Activated CD4-positive, alpha-beta T cell treated with anti-CD3 and anti-CD28 coated beads, Interleukin-2, amount 10 ng/mL, durations not matched to agents 24 days and 14 days (primary cell): ENCODE measurements at regions of chr14 and their contacts with region 1.

Region 1: GRCh38 chr14:50085570-50086320 is 30.6 kb downstream of the VCPKMT start:
- DNase-seq: peak; percentile 74
- H3K4me3 Mint-ChIP-seq: peak overlapping the region; percentile 63
- H3K27ac Mint-ChIP-seq: peak overlapping the region; percentile 93
- H3K4me1 Mint-ChIP-seq: peaks cover 80% of the 10 kb centered on the region
- H3K27me3 Mint-ChIP-seq: no peaks in the 10 kb centered on the region

Region 2: DNA sequence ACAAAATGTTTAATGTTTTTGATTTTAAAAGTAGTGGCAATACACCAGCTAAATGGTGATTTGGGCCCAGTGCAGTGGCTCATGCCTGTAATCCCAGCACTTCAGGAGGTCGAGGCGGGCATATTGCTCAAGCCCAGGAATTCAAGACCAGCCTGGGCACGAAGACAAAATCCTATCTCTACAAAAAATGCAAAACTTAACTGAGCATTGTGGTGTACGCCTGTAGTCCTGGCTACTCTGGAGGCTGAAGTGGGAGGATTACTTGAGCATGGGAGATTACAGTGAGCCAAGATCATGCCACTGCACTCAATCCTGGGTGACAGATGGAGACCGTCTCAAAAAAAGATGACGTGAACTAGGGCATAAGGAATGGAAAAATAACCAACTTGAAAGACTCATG is 470.0 kb before region 1 on chr14:
- intact Hi-C with region 1: no loop called
- DNase-seq: no peak
- H3K4me3 Mint-ChIP-seq: no peak overlapping the region
- H3K27ac Mint-ChIP-seq: no peak overlapping the region
- H3K4me1 Mint-ChIP-seq: peaks cover 21% of the 10 kb centered on the region
- H3K27me3 Mint-ChIP-seq: no peaks in the 10 kb centered on the region

Region 3: DNA sequence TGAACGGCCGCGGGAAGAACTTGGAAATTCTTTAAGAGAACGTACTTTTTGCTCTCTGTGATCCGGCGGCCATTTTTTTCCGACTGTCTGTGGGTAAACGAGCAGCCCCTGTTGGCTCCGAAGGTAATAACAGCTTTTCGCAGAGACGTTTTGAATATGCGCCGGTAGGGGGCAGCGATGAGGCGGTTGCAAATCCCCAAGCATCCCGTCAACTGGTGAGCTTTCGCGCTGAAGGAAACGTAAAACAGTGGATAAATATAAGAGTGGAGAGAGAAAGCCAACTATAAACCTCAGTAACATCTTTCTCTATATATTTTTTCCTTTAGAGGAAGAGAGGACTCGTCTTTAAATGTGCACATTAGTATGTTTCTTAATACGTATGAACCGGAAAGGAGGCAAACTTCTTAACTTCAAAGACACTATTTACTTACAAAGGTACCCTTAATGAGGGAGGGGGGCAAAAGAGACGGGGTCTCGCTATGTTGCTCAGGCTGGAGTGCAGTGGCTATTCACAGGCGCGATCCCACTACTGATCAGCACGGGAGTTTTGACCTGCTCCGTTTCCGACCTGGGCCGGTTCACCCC is 223.6 kb before region 1 on chr14:
- intact Hi-C with region 1: loop called (anchors 1 kb)
- DNase-seq: peak; percentile 95
- H3K4me3 Mint-ChIP-seq: no peak overlapping the region
- H3K27ac Mint-ChIP-seq: no peak overlapping the region
- H3K4me1 Mint-ChIP-seq: peaks cover 18% of the 10 kb centered on the region
- H3K27me3 Mint-ChIP-seq: peaks cover 4% of the 10 kb centered on the region

Region 4: DNA sequence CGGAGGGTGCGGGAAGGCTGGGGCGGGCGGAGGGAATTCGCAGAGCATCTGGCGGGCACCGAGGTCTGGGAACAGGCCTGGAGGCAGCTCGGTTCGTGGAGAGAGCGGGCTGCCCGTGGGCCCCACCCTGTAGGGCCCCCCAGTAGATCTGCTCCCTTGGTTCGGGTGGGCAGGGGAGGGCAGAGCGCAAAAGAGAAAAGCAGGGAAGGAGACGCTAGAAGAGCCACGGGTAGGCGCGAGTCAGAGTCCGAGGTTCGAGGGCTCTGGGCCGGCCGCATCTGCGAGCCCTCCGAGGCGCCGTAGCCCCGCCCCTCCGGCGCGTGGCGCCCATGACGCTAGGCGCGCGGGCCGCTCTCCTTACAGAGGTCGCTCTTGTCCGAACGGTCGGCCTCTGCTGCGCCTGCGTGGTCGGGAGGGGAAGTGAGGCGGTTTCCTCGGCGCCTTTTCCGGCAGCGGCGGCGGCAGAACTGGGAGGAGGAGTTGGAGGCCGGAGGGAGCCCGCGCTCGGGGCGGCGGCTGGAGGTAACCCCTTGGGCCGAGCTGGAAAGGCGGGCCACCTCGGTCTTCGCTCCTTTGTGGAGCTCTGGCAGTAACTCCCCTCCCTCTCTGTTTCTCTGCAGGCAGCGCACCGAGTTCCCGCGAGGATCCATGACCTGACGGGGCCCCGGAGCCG is 193.0 kb before region 1 on chr14 and contains the start of gene ARF6:
- intact Hi-C with region 1: loop called (anchors 1 kb)
- DNase-seq: peak; percentile 99
- H3K4me3 Mint-ChIP-seq: peak within 1 kb of the TSS; percentile 96
- H3K27ac Mint-ChIP-seq: peak within 1 kb of the TSS; percentile 100
- H3K4me1 Mint-ChIP-seq: peaks cover 21% of the 10 kb centered on the region
- H3K27me3 Mint-ChIP-seq: no peaks in the 10 kb centered on the region
- total RNA-seq, gene ARF6: 154 and 160 TPM in 2 replicates

Region 5: DNA sequence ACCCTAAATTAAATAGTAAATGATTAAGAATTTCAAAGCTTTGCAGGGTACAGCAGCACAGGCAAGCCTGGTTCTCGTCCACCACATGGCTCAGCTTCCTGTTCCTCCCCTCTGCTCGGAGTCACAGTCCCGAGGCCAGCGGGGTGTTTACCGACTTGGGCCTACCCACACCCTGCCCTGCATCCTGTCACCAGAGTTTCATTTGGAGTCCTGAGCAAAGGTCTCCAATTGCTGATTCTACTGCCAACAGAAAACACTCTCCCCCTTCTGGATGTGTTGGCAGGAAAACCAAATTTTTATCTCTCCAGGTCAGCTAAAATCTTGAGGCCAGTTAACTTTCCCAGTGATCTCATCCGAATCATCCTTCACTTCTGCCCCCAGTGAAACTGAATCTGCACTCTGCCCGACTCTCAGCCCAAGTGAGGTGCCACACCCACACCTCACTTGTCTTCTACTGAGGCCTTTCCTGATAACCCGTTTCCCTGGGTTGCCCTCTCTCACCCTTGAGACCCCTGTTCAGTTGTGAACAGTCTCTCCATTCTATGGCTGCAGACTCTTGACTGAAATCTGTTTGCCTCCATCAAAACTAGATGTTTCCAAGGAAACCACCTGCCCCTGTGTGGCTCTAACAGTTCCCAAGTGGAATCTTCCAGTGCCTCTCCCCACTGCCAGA is 40.6 kb before region 1 on chr14:
- intact Hi-C with region 1: loop called (anchors 1 kb)
- DNase-seq: peak; percentile 93
- H3K4me3 Mint-ChIP-seq: peak overlapping the region; percentile 48
- H3K27ac Mint-ChIP-seq: peak overlapping the region; percentile 93
- H3K4me1 Mint-ChIP-seq: peaks cover 55% of the 10 kb centered on the region
- H3K27me3 Mint-ChIP-seq: no peaks in the 10 kb centered on the region

Region 6: GRCh38 chr14:50095895-50096294 is 10.2 kb after region 1 on chr14:
- intact Hi-C with region 1: loop called (anchors 1 kb)
- DNase-seq: peak; percentile 73
- H3K4me3 Mint-ChIP-seq: peak overlapping the region; percentile 51
- H3K27ac Mint-ChIP-seq: peak overlapping the region; percentile 51
- H3K4me1 Mint-ChIP-seq: peaks cover 53% of the 10 kb centered on the region
- H3K27me3 Mint-ChIP-seq: no peaks in the 10 kb centered on the region

Region 7: DNA sequence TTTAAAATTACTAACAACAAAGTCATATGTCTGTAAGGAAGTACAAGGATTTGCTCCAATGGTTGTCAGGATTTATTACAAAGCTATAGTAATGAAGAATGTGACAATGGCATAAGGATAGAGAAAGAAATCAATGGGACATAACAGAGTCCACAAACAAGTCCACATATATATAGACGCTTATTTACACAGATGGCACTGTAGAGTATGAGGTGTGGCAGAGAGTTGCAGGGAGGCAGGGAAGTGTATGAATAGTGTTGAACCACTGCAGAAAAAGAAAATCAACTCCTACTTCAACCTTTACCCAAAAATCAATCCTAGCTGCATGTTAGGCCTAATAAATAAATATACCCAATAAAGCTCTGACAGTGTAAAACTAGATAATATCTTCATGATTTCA is 124.3 kb after region 1 on chr14:
- intact Hi-C with region 1: no loop called
- DNase-seq: no peak
- H3K4me3 Mint-ChIP-seq: no peak overlapping the region
- H3K27ac Mint-ChIP-seq: no peak overlapping the region
- H3K4me1 Mint-ChIP-seq: peaks cover 4% of the 10 kb centered on the region
- H3K27me3 Mint-ChIP-seq: no peaks in the 10 kb centered on the region

Region 8: GRCh38 chr14:50520947-50521815 is 435.4 kb after region 1 on chr14:
- intact Hi-C with region 1: loop called (anchors 5 kb)
- DNase-seq: peak; percentile 77
- H3K4me3 Mint-ChIP-seq: peak overlapping the region; percentile 67
- H3K27ac Mint-ChIP-seq: peak overlapping the region; percentile 94
- H3K4me1 Mint-ChIP-seq: peaks cover 39% of the 10 kb centered on the region
- H3K27me3 Mint-ChIP-seq: no peaks in the 10 kb centered on the region